Body of pancreas (tissue), 4 donors: ENCODE measurements at regions of chr5 and their contacts with region 1.

Region 1: DNA sequence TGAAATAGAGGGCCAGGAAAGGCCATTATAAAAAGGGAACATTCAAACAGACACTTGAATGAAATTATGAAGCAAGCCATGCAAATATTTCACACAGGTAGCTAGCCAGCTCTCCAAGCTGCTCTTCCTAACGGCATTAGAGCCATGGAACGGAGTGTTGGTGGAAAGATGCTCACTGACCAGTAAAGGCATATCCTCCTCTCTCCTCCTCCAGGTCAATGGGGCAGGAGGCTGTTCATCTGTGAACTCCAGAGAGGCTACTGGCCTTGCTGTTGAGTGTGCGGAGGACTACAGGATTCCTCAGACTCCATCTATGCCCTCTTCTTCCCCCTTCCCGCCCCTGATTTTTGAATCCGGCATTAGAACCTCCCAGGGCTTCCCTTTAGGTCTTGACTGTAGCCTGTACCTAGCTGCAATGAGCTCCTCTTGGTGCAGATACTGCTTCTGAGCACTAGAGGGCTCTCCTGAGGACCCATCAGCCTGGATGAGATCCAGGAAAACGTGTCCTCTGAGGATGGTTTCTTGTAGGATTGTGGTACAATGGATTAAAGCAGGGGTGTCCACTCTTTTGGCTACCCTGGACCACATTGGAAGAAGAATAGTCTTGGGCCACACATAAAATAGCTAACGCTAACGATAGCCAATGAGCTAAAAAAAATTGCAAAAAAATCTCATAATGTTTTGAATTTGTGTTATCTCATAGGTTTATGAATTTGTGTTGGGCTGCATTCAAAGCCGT is 162.2 kb downstream of the SREK1 start:
- DNase-seq: peak; percentile 52 to 69 (median 64)
- ATAC-seq: peak; percentile 93
- H3K4me3 ChIP-seq: no peak overlapping the region
- H3K27ac ChIP-seq: no peak overlapping the region
- H3K4me1 ChIP-seq: no peaks in the 10 kb centered on the region
- H3K27me3 ChIP-seq: no peaks in the 10 kb centered on the region
- CTCF ChIP-seq: peak; percentile 62 to 84 (median 74)
- POLR2A ChIP-seq: no peak

Region 2: GRCh38 chr5:65893749-65894435 is 412.4 kb before region 1 on chr5:
- intact Hi-C with region 1: no loop called
- DNase-seq: no peak
- ATAC-seq: no peak
- H3K4me3 ChIP-seq: no peak overlapping the region
- H3K27ac ChIP-seq: no peak overlapping the region
- H3K4me1 ChIP-seq: no peaks in the 10 kb centered on the region
- H3K27me3 ChIP-seq: no peaks in the 10 kb centered on the region
- CTCF ChIP-seq: no peak
- POLR2A ChIP-seq: no peak

Region 3: DNA sequence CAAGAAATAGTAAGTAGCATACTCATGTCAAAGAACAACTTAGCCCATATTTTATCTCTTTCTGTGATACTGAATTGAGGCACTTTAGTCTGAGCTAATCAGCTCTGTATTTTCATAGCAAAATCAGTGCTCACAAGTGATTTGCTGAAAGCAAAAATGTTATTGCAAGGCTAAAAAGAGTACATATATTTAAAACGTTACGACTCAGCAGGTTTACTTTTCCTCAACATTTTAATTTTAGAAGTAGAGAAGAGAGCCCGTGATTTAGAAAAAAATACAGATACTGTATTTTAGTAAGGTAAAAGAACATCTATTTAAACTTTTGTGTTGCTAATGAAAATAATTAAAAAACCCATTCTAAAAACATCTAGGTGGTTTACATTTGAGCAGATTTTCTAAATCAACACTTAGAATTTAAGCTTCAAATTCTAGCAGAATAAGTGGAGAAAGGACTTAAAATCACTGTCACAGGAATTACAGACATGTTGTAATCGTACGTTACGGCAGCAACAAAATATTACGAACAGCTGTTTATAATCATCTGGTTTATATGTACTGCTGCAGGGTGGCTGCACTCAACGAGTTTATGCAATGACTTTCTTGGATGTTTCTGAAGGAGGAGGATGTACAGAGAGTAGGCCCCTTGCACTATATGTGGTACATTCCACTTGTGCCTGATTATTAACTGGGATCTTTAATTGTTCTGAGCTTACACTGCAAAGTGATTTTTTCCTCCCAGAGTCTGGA is 142.1 kb before region 1 on chr5:
- intact Hi-C with region 1: no loop called
- DNase-seq: no peak
- ATAC-seq: no peak
- H3K4me3 ChIP-seq: no peak overlapping the region
- H3K27ac ChIP-seq: no peak overlapping the region
- H3K4me1 ChIP-seq: no peaks in the 10 kb centered on the region
- H3K27me3 ChIP-seq: no peaks in the 10 kb centered on the region
- CTCF ChIP-seq: no peak
- POLR2A ChIP-seq: no peak

Region 4: DNA sequence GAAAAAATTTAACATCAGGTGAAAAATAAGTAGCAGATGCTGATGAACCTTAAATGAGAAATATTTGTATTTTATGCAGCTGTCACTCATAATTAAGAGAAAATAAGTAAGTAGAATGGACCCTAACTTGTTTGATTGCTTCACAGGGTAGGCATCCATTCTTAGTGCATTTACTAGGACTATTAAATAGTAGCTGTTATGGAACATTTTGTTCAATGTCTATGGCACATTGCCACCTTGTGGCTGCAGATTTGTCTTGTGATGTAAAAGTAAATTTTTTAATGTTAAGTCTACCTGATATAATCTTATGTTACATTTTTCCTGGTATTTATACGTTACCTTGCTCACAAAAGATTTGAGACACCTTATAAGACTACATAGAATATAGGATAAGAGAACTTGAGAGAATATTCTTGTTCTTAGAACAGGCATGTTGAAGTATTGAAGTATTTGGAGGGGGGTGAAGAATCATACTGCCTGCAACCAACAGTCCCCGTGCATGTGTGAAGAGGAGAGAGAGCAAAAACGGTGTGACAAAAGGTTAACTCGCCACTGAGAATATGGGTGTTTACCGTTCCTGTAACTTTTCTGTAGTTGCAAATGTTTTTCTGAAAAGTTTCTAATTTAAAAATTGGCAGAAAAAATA is 451.0 kb after region 1 on chr5:
- intact Hi-C with region 1: loop called (anchors 5 kb)
- DNase-seq: peak; percentile 58 to 73 (median 70)
- ATAC-seq: peak; percentile 67
- H3K4me3 ChIP-seq: no peak overlapping the region
- H3K27ac ChIP-seq: no peak overlapping the region
- H3K4me1 ChIP-seq: no peaks in the 10 kb centered on the region
- H3K27me3 ChIP-seq: no peaks in the 10 kb centered on the region
- CTCF ChIP-seq: peak; percentile 31 to 71 (median 57)
- POLR2A ChIP-seq: no peak